HepG2 (cell line): ENCODE measurements at regions of chr1 and their contacts with region 1.

Region 1: GRCh38 chr1:202085682-202086404 is 36.9 kb upstream of the GPR37L1 start:
- DNase-seq: peak; percentile 99
- ATAC-seq: peak; percentile 89
- H3K4me3 ChIP-seq: peak overlapping the region; percentile 49 to 68 (median 61)
- H3K27ac ChIP-seq: peak overlapping the region; percentile 96
- H3K4me1 ChIP-seq: peaks cover 83% of the 10 kb centered on the region
- H3K27me3 ChIP-seq: no peaks in the 10 kb centered on the region
- CTCF ChIP-seq: no peak; the same call in 1 of the 2 replicates
- EP300 ChIP-seq: peak; percentile 43 to 50; a peak in 3 of 4 replicates
- POLR2A ChIP-seq: peak; percentile 53 to 69
- RAD21 ChIP-seq: no peak

Region 2: GRCh38 chr1:201955009-201955728 is 130.7 kb before region 1 on chr1 and contains the start of gene TIMM17A:
- CTCF ChIA-PET with region 1: no interaction called
- POLR2A ChIA-PET with region 1: no interaction called
- in situ Hi-C with region 1: no loop called
- intact Hi-C with region 1: no loop called
- DNase-seq: peak; percentile 95
- ATAC-seq: peak; percentile 100
- H3K4me3 ChIP-seq: peak within 1 kb of the TSS; percentile 71 to 95 (median 93)
- H3K27ac ChIP-seq: peak within 1 kb of the TSS; percentile 76
- H3K4me1 ChIP-seq: peaks cover 17% of the 10 kb centered on the region
- H3K27me3 ChIP-seq: peaks cover 0 to 3% of the 10 kb centered on the region in 2 experiments; a peak in 1 of 5 replicates
- CTCF ChIP-seq: no peak; the same call in 1 of the 2 replicates
- EP300 ChIP-seq: 0 out of 4 replicates have a peak, but pooled peaks of 1 of the 2 experiments have one; percentile 11
- POLR2A ChIP-seq: peak; percentile 97 to 99
- RAD21 ChIP-seq: 0 out of 2 replicates have a peak, but pooled peaks have one; percentile 16
- total RNA-seq, gene TIMM17A: 97.8 and 115 TPM in 2 replicates

Region 3: GRCh38 chr1:202018468-202019255 is 67.2 kb before region 1 on chr1:
- CTCF ChIA-PET with region 1: no interaction called
- POLR2A ChIA-PET with region 1: interaction called, 118 read pairs
- in situ Hi-C with region 1: no loop called
- intact Hi-C with region 1: no loop called
- DNase-seq: peak; percentile 85
- ATAC-seq: peak; percentile 90
- H3K4me3 ChIP-seq: peak overlapping the region; percentile 38 to 74 (median 51)
- H3K27ac ChIP-seq: peak overlapping the region; percentile 42
- H3K4me1 ChIP-seq: peaks cover 69% of the 10 kb centered on the region
- H3K27me3 ChIP-seq: no peaks in the 10 kb centered on the region
- CTCF ChIP-seq: no peak
- EP300 ChIP-seq: peak in 1 of 2 experiments; percentile 59; a peak in 1 of 4 replicates
- POLR2A ChIP-seq: no peak
- RAD21 ChIP-seq: no peak

Region 4: GRCh38 chr1:202034683-202035462 is 51.0 kb before region 1 on chr1:
- CTCF ChIA-PET with region 1: no interaction called
- POLR2A ChIA-PET with region 1: interaction called, 33 read pairs
- in situ Hi-C with region 1: no loop called
- intact Hi-C with region 1: no loop called
- DNase-seq: peak; percentile 93
- ATAC-seq: peak; percentile 99
- H3K4me3 ChIP-seq: peak overlapping the region; percentile 54 to 75 (median 57)
- H3K27ac ChIP-seq: peak overlapping the region; percentile 75
- H3K4me1 ChIP-seq: peaks cover 78% of the 10 kb centered on the region
- H3K27me3 ChIP-seq: no peaks in the 10 kb centered on the region
- CTCF ChIP-seq: 0 out of 2 replicates have a peak, but pooled peaks have one; percentile 3
- EP300 ChIP-seq: peak in 1 of 2 experiments; percentile 69; a peak in 1 of 4 replicates
- POLR2A ChIP-seq: peak; percentile 39 to 58; a peak in 3 of 4 replicates
- RAD21 ChIP-seq: no peak

Region 5: DNA sequence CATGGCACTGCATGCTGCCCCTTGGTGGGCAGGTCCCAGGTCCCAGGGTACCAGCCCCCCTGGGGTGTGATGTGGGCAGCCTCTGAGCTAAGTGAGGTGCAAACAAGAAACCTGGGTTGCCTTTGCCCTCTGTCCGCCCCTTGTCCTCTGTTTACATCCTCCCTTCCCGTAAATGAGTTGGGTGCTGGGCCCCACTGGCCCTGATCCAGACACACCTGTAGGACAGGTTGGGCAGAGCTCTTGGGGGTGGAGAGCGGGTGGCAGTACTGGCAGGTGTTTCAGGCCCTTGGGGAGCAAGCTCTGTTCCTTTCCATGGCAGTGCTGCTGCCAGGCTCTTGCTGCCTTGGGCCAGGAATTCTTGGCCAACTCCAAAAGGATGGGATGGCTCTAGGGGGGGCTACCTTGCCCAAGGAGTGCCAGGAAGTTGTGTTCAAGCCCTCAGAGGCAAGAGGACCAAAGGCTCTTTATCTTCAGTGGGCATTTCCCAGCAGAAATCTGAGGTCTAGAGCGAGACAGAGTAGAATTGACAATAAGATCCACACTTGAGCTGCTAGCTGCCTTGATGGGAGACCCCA is 39.5 kb before region 1 on chr1:
- CTCF ChIA-PET with region 1: no interaction called
- POLR2A ChIA-PET with region 1: interaction called, 26 read pairs
- in situ Hi-C with region 1: no loop called
- intact Hi-C with region 1: loop called (anchors 1 kb)
- DNase-seq: no peak
- ATAC-seq: peak; percentile 11; the same call in 2 of the 3 replicates
- H3K4me3 ChIP-seq: peak overlapping the region in 1 of 3 experiments; percentile 49; a peak in 2 of 6 replicates
- H3K27ac ChIP-seq: no peak overlapping the region
- H3K4me1 ChIP-seq: peaks cover 80% of the 10 kb centered on the region
- H3K27me3 ChIP-seq: no peaks in the 10 kb centered on the region
- CTCF ChIP-seq: no peak
- EP300 ChIP-seq: peak in 1 of 2 experiments; percentile 68; a peak in 1 of 4 replicates
- POLR2A ChIP-seq: no peak
- RAD21 ChIP-seq: no peak

Region 6: DNA sequence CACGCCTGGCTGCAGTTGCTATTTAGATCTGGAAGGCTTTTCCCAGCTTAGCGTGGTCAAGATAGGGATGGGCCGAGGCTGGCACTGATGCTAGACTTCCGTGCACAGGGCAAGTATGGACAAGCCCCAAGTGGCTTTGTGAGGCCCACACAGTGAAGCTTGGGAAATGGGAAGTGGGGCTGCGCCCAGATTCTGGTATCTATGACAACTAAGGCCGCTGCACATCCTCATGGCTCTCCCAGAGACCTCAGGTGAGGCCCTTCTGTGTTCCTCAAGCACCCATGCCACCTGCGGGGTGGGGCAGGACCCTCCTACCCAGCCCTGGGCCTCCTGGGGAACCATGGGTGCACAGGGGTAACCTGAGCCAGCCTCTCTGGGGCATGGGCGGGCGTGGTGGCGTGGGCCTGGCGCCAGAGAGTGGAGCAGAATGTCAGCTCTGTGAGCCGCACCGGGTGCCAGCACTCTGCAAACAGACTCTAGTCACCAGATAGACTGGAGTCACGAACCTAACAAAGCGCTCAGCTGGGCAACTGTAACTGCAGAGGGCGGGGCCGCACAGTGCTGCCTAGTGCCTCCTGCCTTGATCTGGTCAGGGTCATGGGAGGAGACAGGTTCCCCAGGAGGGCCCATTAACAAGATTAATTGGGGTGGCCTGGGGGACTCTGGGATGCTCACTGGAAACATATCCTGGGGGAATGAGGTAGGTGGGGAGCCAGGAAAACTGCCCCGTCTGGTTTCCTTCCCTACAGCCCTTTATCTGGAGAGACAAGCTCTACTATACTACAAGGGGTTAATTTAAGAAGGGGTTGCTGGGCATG is 29.0 kb before region 1 on chr1:
- CTCF ChIA-PET with region 1: no interaction called
- POLR2A ChIA-PET with region 1: interaction called, 36 read pairs
- in situ Hi-C with region 1: no loop called
- intact Hi-C with region 1: no loop called
- DNase-seq: peak; percentile 89
- ATAC-seq: peak; percentile 88
- H3K4me3 ChIP-seq: peak overlapping the region in 1 of 3 experiments; percentile 59; a peak in 3 of 6 replicates
- H3K27ac ChIP-seq: peak overlapping the region; percentile 60
- H3K4me1 ChIP-seq: peaks cover 66% of the 10 kb centered on the region
- H3K27me3 ChIP-seq: no peaks in the 10 kb centered on the region
- CTCF ChIP-seq: peak; percentile 21; the same call in 1 of the 2 replicates
- EP300 ChIP-seq: 0 out of 4 replicates have a peak, but pooled peaks of 1 of the 2 experiments have one; percentile 48
- POLR2A ChIP-seq: peak in 1 of 2 experiments; percentile 46; a peak in 1 of 4 replicates
- RAD21 ChIP-seq: no peak

Region 7: DNA sequence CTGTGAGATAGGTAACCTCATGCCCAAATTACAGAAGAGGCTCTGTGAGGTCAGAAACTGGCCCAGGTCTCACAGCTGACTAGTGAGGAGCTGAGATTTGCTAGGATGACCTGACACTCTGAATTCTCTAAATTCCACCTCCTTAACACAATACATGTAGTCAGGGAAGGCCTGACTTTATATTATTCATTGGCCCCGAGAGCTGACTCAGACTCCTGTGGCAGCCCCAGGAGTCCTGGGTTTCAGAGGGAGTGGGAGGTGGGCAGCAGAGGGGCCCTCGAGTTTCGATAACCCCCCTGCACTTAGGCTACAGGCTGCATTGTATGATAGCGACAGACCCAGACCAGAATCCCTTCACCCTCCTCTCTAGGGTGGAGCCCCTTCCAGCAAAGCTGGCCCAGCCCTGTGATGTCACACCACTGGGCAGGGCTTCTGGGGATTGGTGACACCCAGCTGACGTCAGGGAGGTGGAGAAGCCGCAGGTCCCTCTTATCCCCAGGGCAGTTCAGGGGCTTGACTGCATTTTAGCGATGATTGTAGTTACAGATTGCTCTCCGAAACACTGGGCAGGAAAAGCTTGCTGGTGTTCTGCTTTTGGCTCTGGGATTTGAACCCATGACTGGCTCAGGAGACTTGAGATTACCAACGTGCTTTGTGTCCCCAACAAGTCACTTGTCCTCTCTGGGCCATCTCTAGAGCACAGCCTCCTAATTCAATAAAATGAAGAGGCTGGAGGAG is 19.9 kb after region 1 on chr1:
- CTCF ChIA-PET with region 1: no interaction called
- POLR2A ChIA-PET with region 1: interaction called, 11 read pairs
- in situ Hi-C with region 1: no loop called
- intact Hi-C with region 1: no loop called
- DNase-seq: no peak
- ATAC-seq: no peak; the same call in 2 of the 3 replicates
- H3K4me3 ChIP-seq: no peak overlapping the region
- H3K27ac ChIP-seq: no peak overlapping the region
- H3K4me1 ChIP-seq: peaks cover 51% of the 10 kb centered on the region
- H3K27me3 ChIP-seq: peaks cover 3 to 5% of the 10 kb centered on the region in 2 experiments; a peak in 2 of 5 replicates
- CTCF ChIP-seq: no peak
- EP300 ChIP-seq: no peak
- POLR2A ChIP-seq: no peak
- RAD21 ChIP-seq: no peak

Region 8: GRCh38 chr1:202112839-202113672 is 27.2 kb after region 1 on chr1:
- CTCF ChIA-PET with region 1: interaction called, 3 read pairs
- POLR2A ChIA-PET with region 1: interaction called, 8 read pairs
- in situ Hi-C with region 1: no loop called
- intact Hi-C with region 1: loop called (anchors 2 kb)
- DNase-seq: no peak
- ATAC-seq: peak; percentile 58
- H3K4me3 ChIP-seq: no peak overlapping the region; a peak in 1 of 6 replicates
- H3K27ac ChIP-seq: no peak overlapping the region
- H3K4me1 ChIP-seq: peaks cover 64% of the 10 kb centered on the region
- H3K27me3 ChIP-seq: peaks cover 0 to 2% of the 10 kb centered on the region in 2 experiments; a peak in 1 of 5 replicates
- CTCF ChIP-seq: no peak
- EP300 ChIP-seq: no peak
- POLR2A ChIP-seq: no peak
- RAD21 ChIP-seq: no peak